ENCODE measurements at regions of chr2 and their contacts with region 1.

Region 1: GRCh38 chr2:46275973-46276372 is 21.2 kb upstream of the EPAS1 start:
- DNase-seq: peak; percentile 89
- H3K4me3 ChIP-seq: no peak overlapping the region
- H3K27ac ChIP-seq: peak overlapping the region; percentile 96
- H3K4me1 ChIP-seq: peaks cover 74% of the 10 kb centered on the region
- H3K27me3 ChIP-seq: no peaks in the 10 kb centered on the region
- CTCF ChIP-seq: no peak
- POLR2A ChIP-seq: no peak

Region 2: DNA sequence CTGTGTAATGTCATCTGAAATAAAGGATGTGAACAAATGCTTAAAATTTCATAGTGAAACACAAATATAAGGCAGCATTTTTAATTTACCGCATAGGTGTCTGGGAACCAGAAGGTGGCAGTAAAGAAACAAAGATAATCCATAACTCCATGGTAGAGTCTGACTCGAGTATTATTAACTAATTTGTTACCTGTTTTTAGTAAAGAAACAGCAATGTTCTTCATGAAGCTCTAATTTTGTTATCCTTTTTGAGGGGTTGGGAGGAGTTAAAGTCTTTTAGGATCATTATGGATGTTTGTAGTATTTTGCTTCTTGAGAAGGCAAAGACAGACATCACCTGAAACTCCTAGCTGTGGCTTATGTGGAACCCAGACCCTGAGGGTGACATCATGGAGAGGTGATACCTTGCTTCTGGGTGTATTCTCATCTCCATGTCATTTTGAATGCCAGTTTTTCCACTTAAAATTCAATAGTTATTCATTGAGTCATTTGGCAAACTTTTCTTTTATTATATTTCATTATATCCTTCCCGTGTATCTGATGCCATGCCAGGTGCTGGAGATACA is 265.0 kb before region 1 on chr2:
- CTCF ChIA-PET with region 1: interaction called, 5 read pairs
- POLR2A ChIA-PET with region 1: no interaction called
- dilution Hi-C with region 1: no loop called
- intact Hi-C with region 1: loop called (anchors 1 kb)
- DNase-seq: peak; percentile 72
- H3K4me3 ChIP-seq: no peak overlapping the region
- H3K27ac ChIP-seq: no peak overlapping the region
- H3K4me1 ChIP-seq: peaks cover 16% of the 10 kb centered on the region
- H3K27me3 ChIP-seq: no peaks in the 10 kb centered on the region
- CTCF ChIP-seq: peak; percentile 32 to 57
- POLR2A ChIP-seq: no peak

Region 3: GRCh38 chr2:46073540-46074018 is 202.4 kb before region 1 on chr2:
- CTCF ChIA-PET with region 1: no interaction called
- POLR2A ChIA-PET with region 1: no interaction called
- dilution Hi-C with region 1: no loop called
- intact Hi-C with region 1: loop called (anchors 2 kb)
- DNase-seq: peak; percentile 97
- H3K4me3 ChIP-seq: peak overlapping the region; percentile 13 to 88 (median 27)
- H3K27ac ChIP-seq: peak overlapping the region; percentile 84
- H3K4me1 ChIP-seq: peaks cover 71% of the 10 kb centered on the region
- H3K27me3 ChIP-seq: no peaks in the 10 kb centered on the region
- CTCF ChIP-seq: no peak
- POLR2A ChIP-seq: peak; percentile 65

Region 4: GRCh38 chr2:46179037-46179652 is 96.8 kb before region 1 on chr2:
- CTCF ChIA-PET with region 1: interaction called, 3 read pairs
- POLR2A ChIA-PET with region 1: no interaction called
- dilution Hi-C with region 1: no loop called
- intact Hi-C with region 1: loop called (anchors 2 kb)
- DNase-seq: peak; percentile 88
- H3K4me3 ChIP-seq: no peak overlapping the region
- H3K27ac ChIP-seq: peak overlapping the region; percentile 84
- H3K4me1 ChIP-seq: peaks cover 13% of the 10 kb centered on the region
- H3K27me3 ChIP-seq: no peaks in the 10 kb centered on the region
- CTCF ChIP-seq: no peak
- POLR2A ChIP-seq: no peak

Region 5: GRCh38 chr2:46230115-46230571 is 45.8 kb before region 1 on chr2:
- CTCF ChIA-PET with region 1: interaction called, 6 read pairs
- POLR2A ChIA-PET with region 1: no interaction called
- dilution Hi-C with region 1: no loop called
- intact Hi-C with region 1: loop called (anchors 2 kb)
- DNase-seq: no peak
- H3K4me3 ChIP-seq: no peak overlapping the region
- H3K27ac ChIP-seq: no peak overlapping the region
- H3K4me1 ChIP-seq: peaks cover 13% of the 10 kb centered on the region
- H3K27me3 ChIP-seq: no peaks in the 10 kb centered on the region
- CTCF ChIP-seq: no peak
- POLR2A ChIP-seq: no peak

Region 6: GRCh38 chr2:46257476-46257875 is 18.5 kb before region 1 on chr2:
- CTCF ChIA-PET with region 1: interaction called, 9 read pairs
- POLR2A ChIA-PET with region 1: interaction called, 3 read pairs
- dilution Hi-C with region 1: no loop called
- intact Hi-C with region 1: loop called (anchors 1 kb)
- DNase-seq: peak; percentile 95
- H3K4me3 ChIP-seq: no peak overlapping the region
- H3K27ac ChIP-seq: peak overlapping the region; percentile 64
- H3K4me1 ChIP-seq: peaks cover 41% of the 10 kb centered on the region
- H3K27me3 ChIP-seq: no peaks in the 10 kb centered on the region
- CTCF ChIP-seq: no peak
- POLR2A ChIP-seq: no peak

Region 7: GRCh38 chr2:46351750-46352138 is 75.8 kb after region 1 on chr2:
- CTCF ChIA-PET with region 1: no interaction called
- POLR2A ChIA-PET with region 1: no interaction called
- dilution Hi-C with region 1: no loop called
- intact Hi-C with region 1: loop called (anchors 1 kb)
- DNase-seq: peak; percentile 95
- H3K4me3 ChIP-seq: peak overlapping the region in 1 of 3 experiments; percentile 10
- H3K27ac ChIP-seq: peak overlapping the region; percentile 61
- H3K4me1 ChIP-seq: peaks cover 50% of the 10 kb centered on the region
- H3K27me3 ChIP-seq: no peaks in the 10 kb centered on the region
- CTCF ChIP-seq: no peak
- POLR2A ChIP-seq: peak; percentile 51